CD14-positive monocyte (primary cell): ENCODE measurements at regions of chr5 and their contacts with region 1.

Region 1: DNA sequence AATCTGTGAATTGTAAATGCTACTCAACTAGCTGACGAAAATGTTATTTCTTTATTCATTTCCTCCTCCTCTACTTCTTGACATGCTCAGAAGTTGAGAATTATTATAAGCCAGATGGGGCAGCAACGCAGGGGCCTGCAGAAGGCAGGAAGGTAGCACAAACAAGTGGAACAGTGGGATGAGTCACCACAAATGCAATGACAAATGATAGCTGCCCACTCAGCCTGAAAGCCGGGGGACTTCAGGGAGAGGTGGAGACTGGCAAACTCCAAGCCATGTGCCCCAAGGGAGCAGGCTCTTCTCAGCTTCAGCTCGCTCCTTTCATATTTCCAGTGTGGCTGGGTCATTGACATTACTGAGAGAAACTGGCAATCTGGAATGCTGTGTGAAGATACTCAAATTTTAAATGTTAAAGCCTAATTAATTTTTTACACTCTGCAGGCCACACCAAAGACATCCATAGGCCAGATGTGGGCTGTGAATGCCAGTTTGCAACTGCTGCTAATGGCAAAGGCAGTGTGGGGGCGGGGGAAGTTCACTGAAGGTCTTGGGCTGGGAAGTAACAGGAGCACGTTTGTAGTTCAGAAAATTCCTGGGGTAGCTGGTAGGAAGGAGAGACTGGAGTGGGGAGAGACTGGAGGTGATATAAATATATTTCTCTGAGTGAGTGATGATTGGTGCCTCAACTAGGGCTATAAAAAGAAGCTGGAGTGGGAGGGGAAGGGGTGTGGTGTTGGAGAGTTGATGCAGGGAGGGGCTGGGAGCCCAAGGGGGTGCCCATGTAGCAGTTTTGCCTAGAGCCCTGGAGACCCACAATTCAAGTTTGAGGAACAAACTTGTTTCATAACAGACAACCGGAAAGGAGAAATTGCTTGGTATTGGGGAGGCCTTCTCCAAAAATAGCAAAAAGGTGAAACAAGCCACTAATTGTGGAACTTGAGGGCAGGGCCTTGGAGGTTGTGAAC is 20.8 kb upstream of the ADRB2 start:
- DNase-seq: peak in 2 of 3 donors; percentile 78 to 82
- H3K4me3 ChIP-seq: peak overlapping the region in 1 of 3 experiments; percentile 70
- H3K4me3 Mint-ChIP-seq: peak overlapping the region; percentile 13 to 80
- H3K27ac ChIP-seq: peak overlapping the region; percentile 60 to 91
- H3K27ac Mint-ChIP-seq: peak overlapping the region; percentile 86 to 99 (median 96)
- H3K4me1 ChIP-seq: peaks cover 80 to 92% of the 10 kb centered on the region in 2 donors
- H3K4me1 Mint-ChIP-seq: peaks cover 95% of the 10 kb centered on the region
- H3K27me3 ChIP-seq: no peaks in the 10 kb centered on the region
- H3K27me3 Mint-ChIP-seq: no peaks in the 10 kb centered on the region
- CTCF ChIP-seq: no peak

Region 2: DNA sequence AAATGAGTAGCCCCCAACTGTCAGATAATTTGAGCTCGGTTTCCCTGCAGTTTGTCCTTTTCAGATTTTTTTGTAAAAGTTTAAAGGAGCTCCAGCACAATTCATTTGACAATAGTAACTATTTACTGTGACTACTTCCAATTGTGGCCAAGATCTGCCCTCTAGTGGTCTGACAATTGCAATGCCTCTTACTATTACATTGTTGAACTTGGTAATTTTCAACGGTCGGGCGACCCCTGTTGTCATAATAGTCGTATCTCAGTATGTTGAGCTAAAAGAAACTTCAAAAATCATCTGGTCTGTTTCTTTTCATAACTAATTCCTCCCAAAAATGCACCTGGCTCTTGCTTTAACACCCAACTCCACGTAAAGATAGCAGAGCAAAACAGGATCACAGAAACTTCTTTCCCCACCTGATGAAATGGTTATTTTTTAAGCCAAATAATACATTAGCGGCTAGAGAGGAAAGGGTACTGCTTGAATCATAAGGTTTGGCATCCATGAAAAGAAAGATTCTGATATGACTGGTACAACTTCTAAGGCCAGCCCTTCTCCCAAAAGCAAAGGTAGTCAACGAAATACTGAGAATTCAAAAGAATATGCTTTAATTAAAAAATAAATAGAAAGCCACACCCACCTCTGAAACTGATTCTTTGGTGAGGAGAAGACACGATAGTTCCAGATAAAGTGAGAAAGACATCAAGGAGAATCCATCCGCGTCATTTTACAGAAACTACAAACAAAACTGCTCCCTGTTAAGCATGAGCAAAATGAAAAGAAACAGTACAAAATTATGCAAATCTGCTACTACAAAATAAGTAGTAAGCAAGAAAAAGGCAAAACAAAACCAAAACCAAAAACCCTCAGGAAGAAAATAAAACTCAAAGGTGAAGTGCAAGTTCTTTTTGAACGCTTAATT is 74.4 kb before region 1 on chr5:
- intact Hi-C with region 1: no loop called
- DNase-seq: peak; percentile 56 to 75 (median 70)
- H3K4me3 ChIP-seq: no peak overlapping the region
- H3K4me3 Mint-ChIP-seq: no peak overlapping the region
- H3K27ac ChIP-seq: no peak overlapping the region
- H3K27ac Mint-ChIP-seq: no peak overlapping the region
- H3K4me1 ChIP-seq: peaks cover 7 to 10% of the 10 kb centered on the region in 2 donors
- H3K4me1 Mint-ChIP-seq: peaks cover 19% of the 10 kb centered on the region
- H3K27me3 ChIP-seq: no peaks in the 10 kb centered on the region
- H3K27me3 Mint-ChIP-seq: peaks cover 1 to 2% (median 1%) of the 10 kb centered on the region in 3 donors
- CTCF ChIP-seq: peak; percentile 93

Region 3: GRCh38 chr5:148746826-148747535 is 58.6 kb before region 1 on chr5:
- intact Hi-C with region 1: loop called in 1 of 2 experiments (anchors 5 kb)
- DNase-seq: peak in 2 of 3 donors; percentile 55 to 68
- H3K4me3 ChIP-seq: peak overlapping the region in 1 of 3 experiments; percentile 16
- H3K4me3 Mint-ChIP-seq: peak overlapping the region in 1 of 2 donors; percentile 76
- H3K27ac ChIP-seq: peak overlapping the region; percentile 40 to 82
- H3K27ac Mint-ChIP-seq: peak overlapping the region; percentile 78 to 93 (median 91)
- H3K4me1 ChIP-seq: peaks cover 48 to 57% of the 10 kb centered on the region in 2 donors
- H3K4me1 Mint-ChIP-seq: peaks cover 56% of the 10 kb centered on the region
- H3K27me3 ChIP-seq: no peaks in the 10 kb centered on the region
- H3K27me3 Mint-ChIP-seq: peaks cover 0 to 4% (median 2%) of the 10 kb centered on the region in 3 donors
- CTCF ChIP-seq: no peak

Region 4: GRCh38 chr5:148791334-148791667 is 14.3 kb before region 1 on chr5:
- intact Hi-C with region 1: loop called in 1 of 2 experiments (anchors 2 kb)
- DNase-seq: peak; percentile 55 to 90 (median 79)
- H3K4me3 ChIP-seq: no peak overlapping the region
- H3K4me3 Mint-ChIP-seq: no peak overlapping the region
- H3K27ac ChIP-seq: peak overlapping the region in 1 of 2 donors; percentile 61
- H3K27ac Mint-ChIP-seq: peak overlapping the region in 4 of 7 donors; percentile 37 to 72 (median 58)
- H3K4me1 ChIP-seq: peaks cover 44 to 55% of the 10 kb centered on the region in 2 donors
- H3K4me1 Mint-ChIP-seq: peaks cover 56% of the 10 kb centered on the region
- H3K27me3 ChIP-seq: no peaks in the 10 kb centered on the region
- H3K27me3 Mint-ChIP-seq: peaks cover 0 to 3% (median 0%) of the 10 kb centered on the region in 3 donors
- CTCF ChIP-seq: no peak